Calu3 (cell line): ENCODE measurements at regions of chr18 and their contacts with region 1.

Region 1: DNA sequence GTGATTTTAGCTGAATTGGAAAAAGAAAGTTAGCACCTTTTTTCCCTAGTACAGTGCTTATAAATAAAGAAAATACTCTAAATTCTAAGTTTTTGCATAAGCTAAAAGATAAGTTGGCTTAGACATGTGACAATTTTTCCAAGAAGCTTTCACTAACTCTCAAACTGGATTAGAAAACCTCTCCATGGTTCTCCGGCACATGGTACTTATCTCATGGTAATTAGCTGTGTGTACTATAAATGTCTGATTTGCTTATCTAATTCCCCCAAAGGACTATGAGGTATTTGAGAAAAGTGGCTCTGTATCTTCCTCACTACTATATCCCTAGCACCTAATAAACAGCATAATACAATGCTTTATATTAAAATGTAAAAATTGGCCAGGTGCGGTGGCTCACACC is 71.1 kb downstream of the ROCK1 start:
- DNase-seq: no peak
- H3K4me3 Mint-ChIP-seq: no peak overlapping the region
- H3K27ac Mint-ChIP-seq: no peak overlapping the region
- H3K4me1 Mint-ChIP-seq: no peaks in the 10 kb centered on the region
- H3K27me3 Mint-ChIP-seq: no peaks in the 10 kb centered on the region
- CTCF ChIP-seq: no peak

Region 2: DNA sequence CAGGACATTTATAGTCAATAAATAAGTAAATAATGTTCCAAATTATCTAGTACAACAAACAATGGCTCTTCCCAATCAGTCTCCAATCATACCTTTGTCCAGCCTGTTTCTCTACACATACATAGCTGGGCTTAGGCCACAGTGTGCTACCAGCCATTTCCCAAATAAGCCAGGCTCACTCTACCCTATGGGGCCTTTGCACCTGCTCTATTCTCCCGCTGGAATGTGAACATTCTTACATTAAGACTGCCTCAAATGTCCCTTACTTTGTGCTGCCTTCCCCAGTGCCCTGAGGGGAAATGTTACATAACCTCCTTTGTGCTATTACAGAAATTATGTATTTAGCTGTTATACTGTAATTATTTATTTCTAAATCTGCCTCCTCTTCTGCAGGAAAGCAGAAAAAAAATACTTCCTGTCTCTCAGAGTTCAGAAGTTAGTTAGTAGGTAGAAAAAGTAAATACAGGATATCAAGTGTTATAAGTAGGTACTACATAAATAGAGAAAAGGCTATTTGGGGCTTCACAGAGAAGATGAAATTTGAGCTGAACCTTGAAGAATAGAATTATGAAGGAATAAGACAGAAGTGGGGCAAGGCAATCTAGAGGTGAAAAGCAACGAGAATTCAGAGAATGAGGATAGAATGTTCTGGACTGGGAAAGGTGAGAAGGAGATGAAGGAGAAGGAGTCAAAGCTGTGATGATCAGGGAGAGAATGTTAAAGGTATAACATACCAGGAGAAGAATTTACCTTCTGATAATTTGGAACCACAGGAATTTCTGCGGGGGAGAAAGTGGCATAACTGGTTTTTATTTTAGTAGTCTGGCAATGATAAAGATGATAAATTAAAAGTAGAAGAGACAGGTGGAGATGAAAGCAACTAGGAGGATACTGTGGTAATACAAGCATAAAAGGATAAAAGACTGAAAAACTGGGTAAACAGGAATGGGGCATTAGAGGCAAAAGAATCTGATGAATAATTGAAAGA is 34.2 kb after region 1 on chr18:
- CTCF ChIA-PET with region 1: no interaction called
- intact Hi-C with region 1: loop called (anchors 5 kb)
- DNase-seq: peak; percentile 25
- H3K4me3 Mint-ChIP-seq: peak overlapping the region; percentile 27
- H3K27ac Mint-ChIP-seq: peak overlapping the region; percentile 53
- H3K4me1 Mint-ChIP-seq: peaks cover 58% of the 10 kb centered on the region
- H3K27me3 Mint-ChIP-seq: no peaks in the 10 kb centered on the region
- CTCF ChIP-seq: no peak

Region 3: DNA sequence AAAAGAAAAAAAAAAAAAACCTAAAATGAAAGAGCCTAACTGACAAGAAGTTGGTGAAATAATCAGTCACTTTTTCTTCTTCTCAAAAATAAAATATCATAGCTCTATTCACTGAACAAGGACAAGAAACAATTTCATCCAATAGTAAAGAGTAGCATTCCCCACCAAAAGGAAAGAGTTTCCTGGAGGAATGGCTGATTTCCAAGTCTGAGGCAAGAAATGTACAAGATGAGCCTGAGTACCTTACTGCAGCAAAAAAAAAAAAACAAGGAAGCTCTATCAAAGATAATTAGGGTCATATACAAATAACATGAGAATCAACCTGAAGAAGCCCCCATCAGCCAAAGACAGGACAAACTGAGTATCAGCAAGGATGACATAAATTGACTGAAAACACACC is 59.7 kb after region 1 on chr18:
- CTCF ChIA-PET with region 1: no interaction called
- intact Hi-C with region 1: loop called (anchors 5 kb)
- DNase-seq: no peak
- H3K4me3 Mint-ChIP-seq: no peak overlapping the region
- H3K27ac Mint-ChIP-seq: no peak overlapping the region
- H3K4me1 Mint-ChIP-seq: peaks cover 26% of the 10 kb centered on the region
- H3K27me3 Mint-ChIP-seq: no peaks in the 10 kb centered on the region
- CTCF ChIP-seq: no peak